Colonic mucosa (tissue), 4 donors: ENCODE measurements at regions of chr11 and their contacts with region 1.

Region 1: GRCh38 chr11:125583496-125583895 is 9.2 kb upstream of the STT3A start:
- DNase-seq: no peak
- H3K4me3 ChIP-seq: no peak overlapping the region
- H3K27ac ChIP-seq: no peak overlapping the region
- H3K4me1 ChIP-seq: no peaks in the 10 kb centered on the region
- H3K27me3 ChIP-seq: no peaks in the 10 kb centered on the region
- CTCF ChIP-seq: no peak

Region 2: DNA sequence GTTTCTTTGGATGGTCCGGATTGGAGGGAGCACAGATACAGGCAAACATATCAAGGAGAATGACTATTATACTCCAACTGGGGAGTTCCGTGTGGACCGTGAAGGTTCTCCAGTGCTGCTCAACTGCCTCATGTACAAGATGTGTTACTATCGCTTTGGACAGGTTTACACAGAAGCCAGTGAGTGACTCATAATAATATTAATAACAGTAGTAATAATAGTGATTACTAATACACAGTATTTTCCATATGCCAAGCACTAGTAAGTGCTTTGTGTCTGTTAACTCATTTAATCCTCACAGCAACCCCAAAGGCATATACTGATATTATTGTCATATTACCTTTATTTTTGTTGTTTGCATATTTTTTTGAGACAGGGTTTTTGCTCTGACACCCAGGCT is 34.9 kb after region 1 on chr11:
- intact Hi-C with region 1: loop called (anchors 5 kb)
- DNase-seq: no peak
- H3K4me3 ChIP-seq: no peak overlapping the region
- H3K27ac ChIP-seq: no peak overlapping the region
- H3K4me1 ChIP-seq: no peaks in the 10 kb centered on the region
- H3K27me3 ChIP-seq: no peaks in the 10 kb centered on the region
- CTCF ChIP-seq: no peak